Tibial artery (tissue), 4 donors: ENCODE measurements at regions of chr7 and their contacts with region 1.

Region 1: GRCh38 chr7:123709525-123709924 is 39.3 kb downstream of the WASL start:
- DNase-seq: no peak
- H3K4me3 ChIP-seq: no peak overlapping the region
- H3K27ac ChIP-seq: no peak overlapping the region
- H3K4me1 ChIP-seq: peaks cover 0 to 39% (median 6%) of the 10 kb centered on the region in 4 donors
- H3K27me3 ChIP-seq: no peaks in the 10 kb centered on the region
- CTCF ChIP-seq: no peak

Region 2: GRCh38 chr7:123494193-123494796 is 215.2 kb before region 1 on chr7:
- intact Hi-C with region 1: loop called (anchors 5 kb)
- DNase-seq: no peak
- H3K4me3 ChIP-seq: no peak overlapping the region
- H3K27ac ChIP-seq: no peak overlapping the region
- H3K4me1 ChIP-seq: no peaks in the 10 kb centered on the region
- H3K27me3 ChIP-seq: no peaks in the 10 kb centered on the region
- CTCF ChIP-seq: peak; percentile 49 to 71

Region 3: GRCh38 chr7:123748734-123749536 is 39.4 kb after region 1 on chr7 and contains the start of gene WASL:
- intact Hi-C with region 1: loop called (anchors 5 kb)
- DNase-seq: peak; percentile 90 to 96
- H3K4me3 ChIP-seq: peak within 1 kb of the TSS; percentile 77 to 98
- H3K27ac ChIP-seq: peak within 1 kb of the TSS; percentile 98 to 99
- H3K4me1 ChIP-seq: peaks cover 0 to 62% (median 36%) of the 10 kb centered on the region in 4 donors
- H3K27me3 ChIP-seq: no peaks in the 10 kb centered on the region
- CTCF ChIP-seq: no peak